ENCODE measurements at regions of chr18 and their contacts with region 1.

Region 1: DNA sequence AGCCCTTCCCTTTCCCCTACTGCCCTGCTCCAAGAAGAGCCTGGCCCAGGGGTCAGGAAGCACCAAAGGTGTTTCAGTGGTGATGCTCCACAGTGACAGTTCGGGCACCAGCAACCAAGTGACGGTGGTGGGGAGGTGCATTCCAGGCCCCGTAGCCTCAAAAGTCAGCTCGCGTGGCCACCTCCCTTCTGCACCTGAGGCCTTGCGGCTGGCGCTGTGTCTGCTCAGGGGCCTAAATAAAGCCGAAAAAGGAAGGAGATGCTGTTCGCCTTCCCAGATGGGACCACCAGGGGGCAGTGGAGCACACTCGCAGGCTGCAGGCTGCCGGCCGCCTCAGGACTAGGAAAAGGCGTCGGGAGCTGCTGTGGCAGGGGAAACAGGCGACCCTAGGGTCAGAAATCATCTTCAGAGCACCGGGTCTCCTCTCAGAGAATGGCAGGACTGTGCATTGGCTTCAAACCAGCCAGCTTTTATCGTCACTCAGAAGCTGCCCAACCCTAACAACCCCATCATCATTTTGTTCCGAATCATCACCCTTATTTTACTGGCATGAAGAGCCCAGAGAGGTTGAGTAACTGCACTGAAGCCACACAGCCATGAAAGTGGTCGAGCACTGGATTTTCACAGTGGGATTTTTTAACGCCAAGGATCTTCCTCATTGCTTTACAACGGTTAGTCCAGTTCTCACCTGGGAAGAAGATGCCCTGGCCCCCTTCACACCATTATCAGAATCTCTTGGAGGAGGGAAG is 213.0 kb upstream of the CELF4 start:
- DNase-seq: peak; percentile 84 to 97
- H3K4me3 ChIP-seq: peak overlapping the region in 1 of 4 experiments; percentile 19; a peak in 1 of 8 replicates
- H3K27ac ChIP-seq: no peak overlapping the region
- H3K4me1 ChIP-seq: no peaks in the 10 kb centered on the region
- H3K27me3 ChIP-seq: no peaks in the 10 kb centered on the region
- CTCF ChIP-seq: peak; percentile 92 to 97 (median 94)
- EP300 ChIP-seq: no peak
- POLR2A ChIP-seq: no peak
- RAD21 ChIP-seq: peak; percentile 94 to 97

Region 2: DNA sequence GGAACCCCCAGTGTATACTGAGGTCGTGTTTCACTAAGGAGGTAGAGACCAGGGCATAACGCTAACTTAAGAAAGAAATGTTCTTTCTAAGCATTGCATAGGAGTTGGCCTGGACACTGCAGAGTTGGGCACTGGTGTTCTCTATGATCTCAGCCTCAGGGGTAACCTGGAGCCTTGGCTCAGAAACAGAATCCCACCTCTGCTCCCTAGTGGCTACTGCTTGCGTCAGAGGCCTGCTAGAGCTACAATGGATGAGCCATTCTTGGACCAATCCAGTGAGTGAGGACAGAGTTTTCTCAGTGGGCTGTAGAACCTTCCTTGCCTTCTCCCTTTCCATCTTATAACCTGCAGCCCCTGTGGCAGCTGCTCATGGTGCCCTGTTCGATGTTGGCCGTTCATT is 111.4 kb after region 1 on chr18:
- CTCF ChIA-PET with region 1: interaction called, 27 read pairs
- POLR2A ChIA-PET with region 1: no interaction called
- DNase-seq: peak in 1 of 2 experiments; percentile 45
- H3K4me3 ChIP-seq: no peak overlapping the region; a peak in 1 of 8 replicates
- H3K27ac ChIP-seq: no peak overlapping the region
- H3K4me1 ChIP-seq: no peaks in the 10 kb centered on the region; a peak in 1 of 7 replicates
- H3K27me3 ChIP-seq: no peaks in the 10 kb centered on the region
- CTCF ChIP-seq: peak; percentile 36 to 53 (median 49)
- EP300 ChIP-seq: no peak
- POLR2A ChIP-seq: no peak
- RAD21 ChIP-seq: peak; percentile 60 to 70